GM10248 (cell line): ENCODE measurements at regions of chr2 and their contacts with region 1.

Region 1: DNA sequence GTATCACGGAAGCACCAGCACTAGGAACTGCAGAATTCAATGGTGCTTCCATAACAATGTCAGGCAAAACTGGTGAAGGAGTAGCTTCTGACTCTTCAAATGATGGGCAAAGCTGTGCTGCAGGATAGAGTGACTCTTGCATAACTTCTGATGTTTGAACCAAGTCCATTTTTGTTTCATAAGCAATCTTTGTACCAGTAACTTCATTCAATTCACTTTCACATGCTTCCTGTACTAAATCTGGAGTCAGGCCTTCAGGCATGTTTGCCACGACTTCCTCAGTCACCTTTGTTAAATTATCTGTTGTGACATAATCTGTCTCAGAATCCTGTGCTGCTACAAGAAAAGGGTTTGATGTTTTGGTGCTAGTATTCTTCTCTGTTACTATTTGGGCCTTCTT is 24.0 kb downstream of the RTN4 start:
- DNase-seq: no peak
- CTCF ChIP-seq: no peak

Region 2: GRCh38 chr2:55010149-55010591 is 16.0 kb before region 1 on chr2:
- CTCF ChIA-PET with region 1: interaction called, 26 read pairs
- POLR2A ChIA-PET with region 1: no interaction called
- DNase-seq: peak; percentile 48
- CTCF ChIP-seq: no peak

Region 3: GRCh38 chr2:55338268-55338667 is 312.1 kb after region 1 on chr2:
- CTCF ChIA-PET with region 1: no interaction called
- POLR2A ChIA-PET with region 1: no interaction called
- DNase-seq: no peak
- CTCF ChIP-seq: no peak